ENCODE measurements at regions of chr1 and their contacts with region 1.

Region 1: DNA sequence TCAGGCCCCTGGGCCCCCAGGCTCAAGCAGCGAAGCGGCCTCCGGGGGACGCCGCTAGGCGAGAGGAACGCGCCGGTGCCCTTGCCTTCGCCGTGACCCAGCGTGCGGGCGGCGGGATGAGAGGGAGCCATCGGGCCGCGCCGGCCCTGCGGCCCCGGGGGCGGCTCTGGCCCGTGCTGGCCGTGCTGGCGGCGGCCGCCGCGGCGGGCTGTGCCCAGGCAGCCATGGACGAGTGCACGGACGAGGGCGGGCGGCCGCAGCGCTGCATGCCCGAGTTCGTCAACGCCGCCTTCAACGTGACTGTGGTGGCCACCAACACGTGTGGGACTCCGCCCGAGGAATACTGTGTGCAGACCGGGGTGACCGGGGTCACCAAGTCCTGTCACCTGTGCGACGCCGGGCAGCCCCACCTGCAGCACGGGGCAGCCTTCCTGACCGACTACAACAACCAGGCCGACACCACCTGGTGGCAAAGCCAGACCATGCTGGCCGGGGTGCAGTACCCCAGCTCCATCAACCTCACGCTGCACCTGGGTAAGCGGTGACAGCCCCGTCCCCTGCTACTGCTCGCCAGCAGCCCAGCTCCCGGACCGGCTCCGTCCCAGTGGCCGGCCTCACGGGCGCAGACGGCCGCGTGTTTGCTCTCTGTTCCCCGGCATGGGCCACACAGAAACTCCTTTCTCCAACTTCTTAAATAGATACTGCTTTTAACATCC is 539 bp downstream of the LAMC1 start:
- DNase-seq: peak; percentile 62 to 84 (median 82)
- ATAC-seq: peak; percentile 44 to 51
- H3K4me3 ChIP-seq: peak overlapping the region; percentile 97
- H3K27ac ChIP-seq: peak overlapping the region; percentile 94
- H3K4me1 ChIP-seq: no peaks in the 10 kb centered on the region
- H3K27me3 ChIP-seq: no peaks in the 10 kb centered on the region

Region 2: GRCh38 chr1:183101841-183102276 is 78.1 kb after region 1 on chr1:
- intact Hi-C with region 1: loop called in 1 of 4 experiments (anchors 10 kb)
- DNase-seq: peak in 2 of 3 donors; percentile 48 to 62
- ATAC-seq: peak; percentile 46 to 50
- H3K4me3 ChIP-seq: no peak overlapping the region
- H3K27ac ChIP-seq: peak overlapping the region; percentile 48
- H3K4me1 ChIP-seq: peaks cover 18% of the 10 kb centered on the region
- H3K27me3 ChIP-seq: no peaks in the 10 kb centered on the region

Measured in right cardiac atrium (tissue), 5 donors.